ENCODE measurements at regions of chr2 and their contacts with region 1.

Region 1: DNA sequence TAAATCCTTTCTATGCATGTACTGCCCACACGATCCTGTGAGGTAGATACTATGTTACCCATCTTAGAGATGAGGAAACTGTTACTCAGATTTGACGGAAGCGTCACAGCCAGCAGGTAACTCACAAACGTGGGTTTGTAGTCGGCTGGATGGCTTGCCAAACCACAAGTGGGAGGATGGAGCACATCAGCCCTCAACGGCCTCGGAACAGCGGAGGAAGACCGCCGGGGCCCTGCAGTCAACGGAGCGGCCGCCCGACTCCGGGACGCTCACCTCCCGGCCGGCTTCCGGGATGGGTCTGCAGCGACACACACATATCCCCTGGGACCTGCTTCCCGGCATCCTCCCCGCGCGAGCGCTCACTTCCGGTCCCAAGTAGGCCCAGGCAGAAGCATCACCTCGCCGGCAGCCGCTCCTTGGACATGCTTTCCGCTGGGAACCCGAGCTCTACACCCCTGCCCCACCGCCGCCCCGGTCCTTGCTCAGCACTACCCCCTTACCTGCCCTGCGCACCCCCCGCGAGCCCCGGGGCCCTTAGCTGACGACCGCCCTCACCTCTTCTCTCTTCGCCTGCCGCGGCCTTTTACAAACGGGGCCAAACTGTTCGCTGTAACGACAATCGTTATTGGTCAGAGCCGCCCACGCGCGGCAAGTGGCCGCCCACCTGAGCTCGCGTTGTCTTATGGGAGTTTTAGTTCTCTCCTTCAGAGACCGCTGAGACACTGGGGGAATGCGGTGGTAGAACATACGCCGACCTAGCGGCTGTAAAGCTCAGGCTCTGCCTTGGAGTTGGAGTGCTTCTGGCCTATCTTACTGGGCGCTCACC is at the start of gene C2orf42:
- DNase-seq: peak; percentile 96 to 97 (median 97)
- ATAC-seq: peak; percentile 96 to 98 (median 98)
- H3K4me3 ChIP-seq: peak within 1 kb of the TSS; percentile 48 to 99 (median 80)
- H3K27ac ChIP-seq: peak within 1 kb of the TSS; percentile 87 to 98 (median 94)
- H3K4me1 ChIP-seq: peaks cover 0 to 13% (median 4%) of the 10 kb centered on the region in 12 donors
- H3K27me3 ChIP-seq: no peaks in the 10 kb centered on the region
- CTCF ChIP-seq: peak in 2 of 12 donors; percentile 19 to 33
- POLR2A ChIP-seq: peak in 1 of 2 donors; percentile 90
- total RNA-seq, gene C2orf42: 6.2 to 14.9 (median 10.9) TPM

Region 2: GRCh38 chr2:70142590-70143313 is 47.9 kb before region 1 on chr2:
- intact Hi-C with region 1: loop called in 1 of 10 experiments (anchors 1 kb)
- DNase-seq: peak; percentile 99 to 100 (median 99)
- ATAC-seq: peak; percentile 90 to 91 (median 90)
- H3K4me3 ChIP-seq: peak overlapping the region in 11 of 12 donors; percentile 26 to 92 (median 73)
- H3K27ac ChIP-seq: peak overlapping the region; percentile 94 to 100 (median 98)
- H3K4me1 ChIP-seq: peaks cover 2 to 35% (median 20%) of the 10 kb centered on the region in 12 donors
- H3K27me3 ChIP-seq: no peaks in the 10 kb centered on the region
- CTCF ChIP-seq: peak; percentile 91 to 99 (median 97)
- POLR2A ChIP-seq: peak in 1 of 2 donors; percentile 47

Region 3: GRCh38 chr2:70248181-70248847 is 57.7 kb after region 1 on chr2 and contains the start of gene TIA1:
- intact Hi-C with region 1: loop called in 1 of 10 experiments (anchors 2 kb)
- DNase-seq: peak; percentile 98 to 99 (median 99)
- ATAC-seq: peak; percentile 98 to 99 (median 98)
- H3K4me3 ChIP-seq: peak within 1 kb of the TSS; percentile 52 to 98 (median 82)
- H3K27ac ChIP-seq: peak within 1 kb of the TSS; percentile 91 to 99 (median 96)
- H3K4me1 ChIP-seq: peaks cover 2 to 44% (median 33%) of the 10 kb centered on the region in 12 donors
- H3K27me3 ChIP-seq: no peaks in the 10 kb centered on the region
- CTCF ChIP-seq: no peak
- POLR2A ChIP-seq: peak; percentile 23 to 86
- total RNA-seq, gene TIA1: 26.1 to 53.0 (median 42.1) TPM